HepG2 (cell line): ENCODE measurements at regions of chr2 and their contacts with region 1.

Region 1: DNA sequence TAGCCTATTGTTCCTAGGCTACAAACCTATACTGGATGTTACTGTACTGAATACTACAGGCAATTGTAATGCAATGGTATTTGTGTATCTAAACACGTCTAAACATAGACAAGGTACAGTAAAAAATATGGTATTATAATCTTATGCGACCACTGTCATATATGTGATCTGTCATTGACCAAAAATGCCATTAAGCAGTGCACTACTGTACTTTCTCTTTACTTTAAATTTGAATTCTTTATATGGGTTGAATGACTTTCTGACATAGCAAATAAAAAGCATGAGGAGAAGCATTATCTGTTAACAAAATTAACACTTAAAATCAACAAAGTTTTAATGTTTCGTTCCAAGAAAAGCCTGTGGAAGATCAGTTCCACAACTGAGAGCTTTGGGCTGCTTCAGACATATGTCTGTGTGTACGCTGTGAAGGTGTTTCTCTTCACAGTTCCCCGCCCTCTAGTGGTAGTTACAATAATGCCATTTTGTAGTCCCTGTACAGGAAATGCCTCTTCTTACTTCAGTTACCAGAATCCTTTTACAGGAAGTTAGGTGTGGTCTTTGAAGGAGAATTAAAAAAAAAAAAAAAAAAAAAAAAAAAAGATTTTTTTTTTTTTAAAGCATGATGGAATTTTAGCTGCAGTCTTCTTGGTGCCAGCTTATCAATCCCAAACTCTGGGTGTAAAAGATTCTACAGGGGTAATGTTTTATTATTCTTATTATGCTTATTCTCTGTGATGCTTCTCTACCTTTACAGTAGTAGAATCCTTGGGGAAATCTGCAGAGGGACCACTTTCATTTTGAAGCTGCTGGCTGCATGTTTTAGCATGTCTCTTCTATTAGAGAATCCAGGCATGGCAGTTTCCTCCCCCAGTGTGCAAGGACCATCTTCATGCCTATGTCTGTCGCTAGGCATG is 54.5 kb downstream of the SCN2A start:
- DNase-seq: peak; percentile 81
- ATAC-seq: peak; percentile 100
- H3K4me3 ChIP-seq: no peak overlapping the region
- H3K27ac ChIP-seq: no peak overlapping the region
- H3K4me1 ChIP-seq: no peaks in the 10 kb centered on the region
- H3K27me3 ChIP-seq: no peaks in the 10 kb centered on the region
- CTCF ChIP-seq: peak; percentile 83
- EP300 ChIP-seq: no peak
- POLR2A ChIP-seq: no peak
- RAD21 ChIP-seq: no peak

Region 2: GRCh38 chr2:164992818-164993217 is 300.9 kb before region 1 on chr2:
- CTCF ChIA-PET with region 1: interaction called, 6 read pairs
- POLR2A ChIA-PET with region 1: no interaction called
- in situ Hi-C with region 1: no loop called
- intact Hi-C with region 1: loop called (anchors 1 kb)
- DNase-seq: peak; percentile 80
- ATAC-seq: peak; percentile 84
- H3K4me3 ChIP-seq: no peak overlapping the region
- H3K27ac ChIP-seq: no peak overlapping the region
- H3K4me1 ChIP-seq: no peaks in the 10 kb centered on the region
- H3K27me3 ChIP-seq: no peaks in the 10 kb centered on the region
- CTCF ChIP-seq: peak; percentile 73
- EP300 ChIP-seq: no peak
- POLR2A ChIP-seq: no peak
- RAD21 ChIP-seq: 0 out of 2 replicates have a peak, but pooled peaks have one; percentile 20

Region 3: DNA sequence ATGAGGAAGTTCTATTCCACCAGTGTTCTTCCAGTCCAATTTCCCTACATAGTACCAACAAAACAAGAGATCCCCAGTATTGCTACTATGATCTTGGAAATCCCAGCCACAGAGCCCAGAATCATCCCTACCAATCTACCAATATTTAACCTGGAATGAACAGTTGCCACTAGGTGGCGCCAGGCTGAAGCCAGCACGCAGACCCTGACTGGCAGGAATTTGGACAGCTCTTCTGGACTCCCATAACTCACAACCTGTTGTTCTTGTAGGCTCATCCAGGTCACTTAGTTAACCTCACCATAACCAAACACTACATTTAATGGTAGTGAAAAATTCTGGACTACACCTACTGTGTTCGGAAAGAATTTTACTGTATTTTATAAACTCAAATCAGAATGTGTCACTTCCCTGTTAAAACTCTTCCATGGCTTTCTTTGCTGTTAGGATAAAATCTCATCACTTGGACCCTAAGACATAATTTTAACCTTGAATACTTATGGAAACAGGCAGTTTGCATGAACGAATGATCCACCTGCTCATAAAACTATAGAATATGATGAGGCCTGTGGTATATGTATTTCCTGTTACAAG is 278.6 kb before region 1 on chr2:
- CTCF ChIA-PET with region 1: interaction called, 10 read pairs
- POLR2A ChIA-PET with region 1: interaction called, 3 read pairs
- in situ Hi-C with region 1: no loop called
- intact Hi-C with region 1: loop called (anchors 1 kb)
- DNase-seq: peak; percentile 68
- ATAC-seq: peak; percentile 95
- H3K4me3 ChIP-seq: no peak overlapping the region
- H3K27ac ChIP-seq: no peak overlapping the region
- H3K4me1 ChIP-seq: 0 out of 2 replicates have a peak, but pooled peaks cover 8% of the 10 kb centered on the region
- H3K27me3 ChIP-seq: no peaks in the 10 kb centered on the region
- CTCF ChIP-seq: peak; percentile 95
- EP300 ChIP-seq: no peak
- POLR2A ChIP-seq: no peak
- RAD21 ChIP-seq: peak; percentile 77

Region 4: DNA sequence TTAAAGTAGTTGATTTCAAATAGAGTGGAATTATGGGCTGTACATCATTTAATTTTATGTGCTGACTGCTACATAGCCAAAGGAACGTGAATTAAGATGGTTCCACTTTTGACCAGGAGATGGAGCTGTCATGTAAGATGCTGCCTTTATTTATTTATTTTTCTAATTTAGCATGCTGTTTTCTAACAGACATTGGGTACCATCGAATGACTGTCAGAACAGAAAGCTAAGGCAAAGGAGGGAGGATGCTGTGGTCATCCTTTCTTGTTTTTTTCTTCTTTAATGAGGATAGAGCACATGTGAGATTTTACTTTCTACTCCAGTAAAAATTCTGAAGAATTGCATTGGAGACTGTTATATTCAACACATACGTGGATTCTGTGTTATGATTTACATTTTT is 54.5 kb before region 1 on chr2 and contains the start of gene SCN2A:
- CTCF ChIA-PET with region 1: interaction called, 11 read pairs
- POLR2A ChIA-PET with region 1: no interaction called
- in situ Hi-C with region 1: no loop called
- intact Hi-C with region 1: loop called (anchors 1 kb)
- DNase-seq: peak; percentile 54
- ATAC-seq: peak; percentile 62
- H3K4me3 ChIP-seq: no peak within 1 kb of the TSS
- H3K27ac ChIP-seq: no peak within 1 kb of the TSS
- H3K4me1 ChIP-seq: no peaks in the 10 kb centered on the region
- H3K27me3 ChIP-seq: no peaks in the 10 kb centered on the region
- CTCF ChIP-seq: peak; percentile 76
- EP300 ChIP-seq: no peak
- POLR2A ChIP-seq: no peak
- RAD21 ChIP-seq: peak; percentile 39; the same call in 1 of the 2 replicates
- total RNA-seq, gene SCN2A: 0.17 and 0.20 TPM in 2 replicates

Region 5: GRCh38 chr2:165274698-165275097 is 19.0 kb before region 1 on chr2:
- CTCF ChIA-PET with region 1: no interaction called
- POLR2A ChIA-PET with region 1: no interaction called
- in situ Hi-C with region 1: no loop called
- intact Hi-C with region 1: no loop called
- DNase-seq: no peak
- ATAC-seq: no peak
- H3K4me3 ChIP-seq: no peak overlapping the region
- H3K27ac ChIP-seq: no peak overlapping the region
- H3K4me1 ChIP-seq: no peaks in the 10 kb centered on the region
- H3K27me3 ChIP-seq: no peaks in the 10 kb centered on the region
- CTCF ChIP-seq: no peak
- EP300 ChIP-seq: no peak
- POLR2A ChIP-seq: no peak
- RAD21 ChIP-seq: no peak